ENCODE measurements at regions of chr3 and their contacts with region 1.

Region 1: GRCh38 chr3:61864886-61865285 is 303.5 kb downstream of the PTPRG start:
- DNase-seq: no peak
- H3K4me3 ChIP-seq: no peak overlapping the region
- H3K27ac ChIP-seq: no peak overlapping the region
- H3K4me1 ChIP-seq: peaks cover 32 to 55% (median 45%) of the 10 kb centered on the region in 4 donors
- H3K27me3 ChIP-seq: no peaks in the 10 kb centered on the region
- CTCF ChIP-seq: no peak
- EP300 ChIP-seq: no peak
- POLR2A ChIP-seq: no peak

Region 2: GRCh38 chr3:61725851-61726333 is 139.0 kb before region 1 on chr3:
- intact Hi-C with region 1: no loop called
- DNase-seq: no peak
- H3K4me3 ChIP-seq: no peak overlapping the region
- H3K27ac ChIP-seq: no peak overlapping the region
- H3K4me1 ChIP-seq: peaks cover 0 to 8% (median 3%) of the 10 kb centered on the region in 4 donors
- H3K27me3 ChIP-seq: no peaks in the 10 kb centered on the region
- CTCF ChIP-seq: no peak
- EP300 ChIP-seq: no peak
- POLR2A ChIP-seq: no peak

Region 3: DNA sequence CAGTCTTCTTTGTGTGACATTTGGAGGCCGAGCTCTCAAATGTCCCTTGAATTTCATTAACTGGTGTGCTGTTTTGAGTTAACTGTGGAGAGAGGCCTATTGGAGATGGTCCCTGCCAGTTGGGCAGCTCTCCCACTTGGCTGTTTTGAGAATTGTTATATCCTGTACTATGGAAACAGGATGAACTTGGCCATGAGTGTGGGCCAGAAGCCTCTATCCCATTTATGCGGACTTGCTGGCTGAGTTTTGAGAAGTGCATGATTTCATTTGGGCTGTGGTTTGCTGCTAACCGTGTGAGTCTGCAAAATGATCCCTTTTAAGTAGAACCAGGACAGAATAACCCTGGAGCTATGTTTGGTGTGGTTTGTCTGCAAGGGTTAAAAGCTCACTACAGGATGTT is 62.4 kb after region 1 on chr3:
- intact Hi-C with region 1: loop called (anchors 5 kb)
- DNase-seq: peak; percentile 93
- H3K4me3 ChIP-seq: peak overlapping the region in 1 of 4 donors; percentile 6
- H3K27ac ChIP-seq: peak overlapping the region; percentile 69 to 76 (median 74)
- H3K4me1 ChIP-seq: peaks cover 52 to 70% (median 64%) of the 10 kb centered on the region in 4 donors
- H3K27me3 ChIP-seq: no peaks in the 10 kb centered on the region
- CTCF ChIP-seq: no peak
- EP300 ChIP-seq: no peak
- POLR2A ChIP-seq: no peak

Region 4: GRCh38 chr3:62139936-62140335 is 275.1 kb after region 1 on chr3:
- intact Hi-C with region 1: no loop called
- DNase-seq: no peak
- H3K4me3 ChIP-seq: no peak overlapping the region
- H3K27ac ChIP-seq: no peak overlapping the region
- H3K4me1 ChIP-seq: peaks cover 0 to 4% (median 0%) of the 10 kb centered on the region in 4 donors
- H3K27me3 ChIP-seq: no peaks in the 10 kb centered on the region
- CTCF ChIP-seq: no peak
- EP300 ChIP-seq: no peak
- POLR2A ChIP-seq: no peak

Region 5: DNA sequence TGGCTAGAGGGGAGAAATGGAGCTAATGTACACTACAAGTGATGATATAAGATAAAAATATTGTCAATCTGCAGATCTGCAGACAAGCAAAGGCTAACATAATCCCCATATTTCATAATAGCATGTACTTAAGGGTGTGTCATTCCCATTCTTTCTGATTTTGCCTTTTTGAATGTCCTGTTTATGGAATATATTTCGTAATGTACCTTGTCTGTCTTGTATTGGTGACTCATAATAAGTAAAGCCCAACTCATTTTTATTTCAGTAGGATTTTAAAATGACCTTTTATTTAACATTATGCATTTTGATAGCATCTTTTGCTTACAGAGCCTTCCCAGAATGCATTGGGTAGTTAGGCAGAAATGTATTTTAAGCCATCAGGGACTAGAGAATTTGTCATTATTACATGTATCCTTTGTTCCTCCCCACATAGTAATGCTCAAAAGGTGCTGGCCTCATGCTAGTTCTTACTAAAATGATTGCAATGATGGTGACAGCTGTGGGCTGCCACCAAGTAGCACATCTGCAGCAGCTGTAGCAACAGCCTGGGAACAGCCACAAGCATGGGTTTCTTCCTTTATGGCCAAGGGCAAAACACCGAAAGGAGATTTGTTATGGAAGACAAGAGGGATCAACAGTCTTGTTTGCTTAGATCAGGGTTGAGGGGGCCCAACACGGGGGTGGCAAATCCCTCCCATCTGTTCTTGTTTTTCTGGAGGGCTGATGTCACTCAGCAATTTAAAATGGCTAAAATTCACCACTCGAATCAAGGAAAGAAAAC is 821.8 kb after region 1 on chr3:
- intact Hi-C with region 1: no loop called
- DNase-seq: no peak
- H3K4me3 ChIP-seq: no peak overlapping the region
- H3K27ac ChIP-seq: peak overlapping the region in 1 of 4 donors; percentile 13
- H3K4me1 ChIP-seq: peaks cover 0 to 7% (median 2%) of the 10 kb centered on the region in 4 donors
- H3K27me3 ChIP-seq: no peaks in the 10 kb centered on the region
- CTCF ChIP-seq: no peak
- EP300 ChIP-seq: no peak
- POLR2A ChIP-seq: no peak